Testis (tissue), 5 donors: ENCODE measurements at regions of chr9 and their contacts with region 1.

Region 1: DNA sequence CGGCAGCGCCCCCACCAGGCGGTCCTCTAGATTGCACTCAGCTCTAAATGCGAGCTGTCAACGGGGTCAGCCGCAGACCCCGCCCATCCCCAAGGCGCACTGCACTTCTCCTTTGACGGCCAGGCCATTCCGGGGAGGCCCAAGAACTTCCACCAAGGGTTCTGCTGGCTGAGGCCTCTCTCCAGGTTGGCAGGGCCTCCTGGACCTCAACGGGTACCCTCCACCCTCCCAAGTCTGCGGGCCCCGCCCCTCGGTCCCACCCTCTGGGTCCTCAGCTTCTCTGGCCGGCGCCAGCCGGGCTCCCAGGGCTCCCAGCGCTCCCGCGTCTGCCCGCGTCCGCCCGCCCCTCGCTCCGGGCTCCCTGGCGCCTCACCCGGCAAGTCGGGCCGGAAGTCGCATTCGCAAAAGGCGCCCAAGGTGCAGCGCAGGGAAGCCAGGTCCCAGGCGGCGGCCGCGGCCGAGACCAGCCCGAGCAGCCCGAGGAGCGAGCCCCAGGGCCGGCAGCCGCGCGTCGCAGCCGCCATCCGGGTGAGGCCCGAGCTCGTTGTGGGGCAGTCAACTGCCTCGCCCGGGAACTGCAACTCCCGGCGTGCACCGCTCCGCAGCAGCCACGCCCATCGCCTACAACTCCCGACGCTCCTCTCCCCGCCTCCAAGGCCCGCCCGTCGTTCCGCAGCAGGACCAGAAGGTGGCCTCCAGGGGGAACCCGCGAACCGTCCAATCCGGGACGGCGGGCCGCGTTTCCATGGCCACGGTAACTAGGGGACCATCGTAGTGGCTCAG is at the start of gene TOR2A:
- DNase-seq: peak; percentile 98
- H3K4me3 ChIP-seq: peak within 1 kb of the TSS; percentile 77 to 88
- H3K27ac ChIP-seq: peak within 1 kb of the TSS; percentile 72 to 94
- H3K4me1 ChIP-seq: peaks cover 35% of the 10 kb centered on the region
- H3K27me3 ChIP-seq: no peaks in the 10 kb centered on the region
- CTCF ChIP-seq: peak; percentile 89 to 99 (median 98)
- POLR2A ChIP-seq: peak; percentile 20
- total RNA-seq, gene TOR2A: 28.7 to 32.0 TPM

Region 2: GRCh38 chr9:127586537-127586936 is 148.4 kb before region 1 on chr9:
- intact Hi-C with region 1: loop called (anchors 5 kb)
- DNase-seq: peak; percentile 92
- H3K4me3 ChIP-seq: no peak overlapping the region
- H3K27ac ChIP-seq: no peak overlapping the region
- H3K4me1 ChIP-seq: no peaks in the 10 kb centered on the region
- H3K27me3 ChIP-seq: no peaks in the 10 kb centered on the region
- CTCF ChIP-seq: peak; percentile 83 to 93 (median 91)
- POLR2A ChIP-seq: no peak

Region 3: GRCh38 chr9:127785023-127785932 is 50.3 kb after region 1 on chr9:
- intact Hi-C with region 1: loop called (anchors 5 kb)
- DNase-seq: peak; percentile 87
- H3K4me3 ChIP-seq: peak overlapping the region; percentile 75 to 98
- H3K27ac ChIP-seq: peak overlapping the region; percentile 80 to 95
- H3K4me1 ChIP-seq: peaks cover 46% of the 10 kb centered on the region
- H3K27me3 ChIP-seq: no peaks in the 10 kb centered on the region
- CTCF ChIP-seq: peak; percentile 94 to 97 (median 96)
- POLR2A ChIP-seq: no peak

Region 4: GRCh38 chr9:127869310-127870152 is 134.6 kb after region 1 on chr9:
- intact Hi-C with region 1: loop called (anchors 10 kb)
- DNase-seq: peak; percentile 92
- H3K4me3 ChIP-seq: no peak overlapping the region
- H3K27ac ChIP-seq: peak overlapping the region in 1 of 2 donors; percentile 83
- H3K4me1 ChIP-seq: peaks cover 44% of the 10 kb centered on the region
- H3K27me3 ChIP-seq: no peaks in the 10 kb centered on the region
- CTCF ChIP-seq: peak; percentile 75 to 94 (median 92)
- POLR2A ChIP-seq: no peak

Region 5: DNA sequence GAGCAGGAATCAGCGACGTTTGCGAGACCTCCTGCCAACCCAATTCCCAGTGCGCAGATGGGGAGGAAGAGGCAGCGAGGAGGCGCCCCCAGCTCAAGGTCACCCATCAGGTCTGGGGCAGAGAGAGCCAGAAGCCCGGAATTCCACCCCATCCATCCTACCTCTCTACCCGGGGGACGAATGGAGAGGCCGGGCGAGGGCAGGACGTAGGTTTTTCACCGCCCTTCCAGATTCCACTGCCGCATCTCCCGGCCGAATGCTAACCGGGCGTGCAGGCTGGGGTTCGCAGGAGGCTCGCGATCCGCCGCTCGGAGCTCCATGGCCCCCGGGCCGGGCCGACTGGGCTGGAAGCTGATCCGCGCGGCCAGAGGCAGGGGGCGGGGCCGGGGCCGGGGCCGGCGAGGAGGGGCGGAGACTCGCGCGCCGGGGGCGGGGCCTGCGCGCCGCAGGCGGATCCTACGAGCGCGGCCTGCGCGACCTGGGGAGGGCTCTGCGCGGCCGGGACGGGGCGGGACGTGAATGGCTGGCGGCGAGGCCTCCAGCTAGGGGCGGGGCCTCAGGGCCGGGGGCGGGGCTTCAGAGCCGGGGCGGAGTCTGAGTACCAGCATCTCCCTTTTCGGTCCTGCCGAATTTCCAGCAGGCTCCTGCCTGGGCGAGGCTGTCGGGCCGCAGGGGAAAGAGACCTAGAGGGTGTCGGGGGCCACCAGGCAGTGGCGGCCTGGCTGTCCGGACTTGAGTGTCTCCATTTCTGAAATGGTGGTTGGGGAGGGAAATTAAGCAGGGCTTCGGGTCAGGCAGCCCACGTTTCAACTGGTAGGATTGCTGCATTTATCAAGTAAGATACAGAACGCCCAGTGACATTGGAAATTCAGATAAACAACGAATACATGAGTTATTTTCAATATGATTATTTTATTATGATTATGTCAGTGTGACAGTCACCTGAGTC is 182.0 kb after region 1 on chr9 and contains the start of gene ST6GALNAC4:
- intact Hi-C with region 1: loop called (anchors 5 kb)
- DNase-seq: peak; percentile 96
- H3K4me3 ChIP-seq: peak within 1 kb of the TSS; percentile 47 to 56
- H3K27ac ChIP-seq: peak within 1 kb of the TSS; percentile 23 to 69
- H3K4me1 ChIP-seq: peaks cover 17% of the 10 kb centered on the region
- H3K27me3 ChIP-seq: no peaks in the 10 kb centered on the region
- CTCF ChIP-seq: no peak
- POLR2A ChIP-seq: no peak
- total RNA-seq, gene ST6GALNAC4: 18.8 to 24.7 TPM